Activated naive CD8-positive, alpha-beta T cell treated with anti-CD3 and anti-CD28 coated beads, Interleukin-2, amount 10 ng/mL, durations not matched to agents 7 days and 5 days (primary cell): ENCODE measurements at regions of chr1 and their contacts with region 1.

Region 1: GRCh38 chr1:244835276-244836134 is at the start of gene COX20:
- DNase-seq: no peak
- ATAC-seq: peak; percentile 67
- H3K4me3 Mint-ChIP-seq: peak within 1 kb of the TSS; percentile 94
- H3K27ac Mint-ChIP-seq: peak within 1 kb of the TSS; percentile 98
- H3K4me1 Mint-ChIP-seq: peaks cover 34% of the 10 kb centered on the region
- H3K27me3 Mint-ChIP-seq: no peaks in the 10 kb centered on the region
- total RNA-seq, gene COX20: 25.1 to 25.9 TPM

Region 2: DNA sequence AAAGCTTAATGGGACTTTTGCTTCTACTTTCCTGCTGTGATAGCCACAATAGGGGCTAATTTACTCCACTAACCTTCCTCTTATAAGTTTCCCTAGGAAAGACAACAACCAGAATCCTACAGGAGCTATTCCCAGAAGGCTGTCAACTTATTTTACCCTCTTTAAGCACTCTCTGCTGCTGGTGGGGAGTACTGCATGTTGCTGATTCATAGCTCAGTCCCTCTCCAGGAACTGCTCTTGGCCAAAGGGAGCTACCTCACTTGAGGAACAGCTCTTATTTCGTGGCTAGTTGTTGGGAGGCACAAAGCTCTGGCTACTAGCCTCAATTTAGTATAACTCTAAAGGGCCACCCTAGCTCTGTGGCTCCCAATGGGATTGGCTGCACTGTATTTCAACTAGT is 421.0 kb before region 1 on chr1:
- POLR2A ChIA-PET with region 1: no interaction called
- DNase-seq: no peak
- ATAC-seq: no peak
- H3K4me3 Mint-ChIP-seq: no peak overlapping the region
- H3K27ac Mint-ChIP-seq: no peak overlapping the region
- H3K4me1 Mint-ChIP-seq: peaks cover 3% of the 10 kb centered on the region
- H3K27me3 Mint-ChIP-seq: no peaks in the 10 kb centered on the region

Region 3: DNA sequence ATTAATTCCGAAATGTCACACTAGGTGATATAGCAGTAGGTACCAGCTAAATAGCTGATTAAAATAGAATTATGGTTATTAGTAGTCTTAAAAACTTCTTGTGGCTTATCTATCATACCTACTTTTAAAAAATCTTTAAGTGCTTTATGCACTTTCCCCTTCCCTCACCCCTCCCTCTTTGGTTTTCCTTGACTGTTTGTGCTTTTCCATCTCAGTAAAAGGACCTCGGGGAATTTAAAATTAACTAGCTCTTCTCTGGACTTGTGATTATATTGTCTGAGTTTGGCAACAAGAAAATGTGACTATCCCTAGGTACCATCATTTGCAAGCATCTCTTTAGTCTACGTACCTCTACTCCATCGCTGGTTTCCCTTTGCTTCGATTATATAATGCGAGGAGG is 11.1 kb after region 1 on chr1:
- POLR2A ChIA-PET with region 1: interaction called, 391 read pairs
- DNase-seq: no peak
- ATAC-seq: no peak
- H3K4me3 Mint-ChIP-seq: no peak overlapping the region
- H3K27ac Mint-ChIP-seq: no peak overlapping the region
- H3K4me1 Mint-ChIP-seq: peaks cover 40% of the 10 kb centered on the region
- H3K27me3 Mint-ChIP-seq: no peaks in the 10 kb centered on the region

Region 4: DNA sequence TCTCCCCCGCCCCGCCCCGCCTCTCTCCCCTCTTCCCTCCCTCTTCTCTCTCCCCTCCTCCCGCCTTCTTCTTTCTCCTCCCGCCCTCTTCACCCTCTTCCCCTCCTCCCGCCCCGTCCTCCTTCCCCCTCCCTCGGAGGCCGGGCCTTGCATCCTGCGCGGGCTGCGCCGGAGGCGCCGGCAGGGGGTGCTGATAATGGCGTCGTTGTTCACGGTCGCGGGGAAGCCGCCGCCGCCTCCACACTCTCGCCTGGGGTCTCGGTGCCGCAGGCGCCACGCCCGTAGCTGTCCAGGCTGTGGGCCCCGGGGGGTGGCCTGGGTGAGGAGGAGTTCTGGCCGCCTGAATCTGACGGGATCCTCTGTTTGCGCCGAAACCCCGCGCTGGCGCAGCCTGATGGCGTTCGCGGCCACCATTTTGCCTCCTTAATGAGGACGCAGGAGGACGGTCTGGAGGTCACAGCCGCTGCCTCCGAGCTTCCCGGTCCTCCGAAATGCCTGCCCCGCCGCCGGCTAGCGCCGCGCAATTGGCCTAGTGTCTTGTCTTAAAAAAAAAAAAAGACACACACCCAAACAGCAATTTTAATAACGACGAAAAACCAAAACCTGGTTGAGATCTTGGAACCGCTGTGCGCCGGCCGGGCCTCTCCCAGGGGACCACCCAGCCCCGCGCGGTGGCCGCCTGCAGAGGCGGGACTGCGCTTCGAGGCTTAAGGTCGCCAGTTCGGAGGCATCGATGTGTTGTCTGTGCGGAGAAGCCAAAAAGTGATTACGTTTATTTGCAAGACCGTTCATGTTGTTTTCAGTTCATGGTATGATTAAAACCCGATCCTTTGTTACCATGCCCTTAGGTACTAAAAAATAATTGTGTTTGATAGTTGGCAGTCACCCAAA is 135.4 kb after region 1 on chr1:
- POLR2A ChIA-PET with region 1: interaction called, 43 read pairs
- DNase-seq: peak; percentile 93
- ATAC-seq: peak; percentile 81
- H3K4me3 Mint-ChIP-seq: peak overlapping the region; percentile 89
- H3K27ac Mint-ChIP-seq: peak overlapping the region; percentile 98
- H3K4me1 Mint-ChIP-seq: peaks cover 19% of the 10 kb centered on the region
- H3K27me3 Mint-ChIP-seq: peaks cover 4% of the 10 kb centered on the region